Activated naive CD8-positive, alpha-beta T cell treated with anti-CD3 and anti-CD28 coated beads, Interleukin-2, amount 10 ng/mL, durations not matched to agents 7 days and 5 days (primary cell): ENCODE measurements at regions of chr17 and their contacts with region 1.

Region 1: GRCh38 chr17:75393523-75394331 is 11.8 kb downstream of the GRB2 start:
- DNase-seq: peak; percentile 82
- ATAC-seq: peak; percentile 91
- H3K4me3 Mint-ChIP-seq: peak overlapping the region; percentile 99
- H3K27ac Mint-ChIP-seq: peak overlapping the region; percentile 83
- H3K4me1 Mint-ChIP-seq: peaks cover 59% of the 10 kb centered on the region
- H3K27me3 Mint-ChIP-seq: no peaks in the 10 kb centered on the region

Region 2: DNA sequence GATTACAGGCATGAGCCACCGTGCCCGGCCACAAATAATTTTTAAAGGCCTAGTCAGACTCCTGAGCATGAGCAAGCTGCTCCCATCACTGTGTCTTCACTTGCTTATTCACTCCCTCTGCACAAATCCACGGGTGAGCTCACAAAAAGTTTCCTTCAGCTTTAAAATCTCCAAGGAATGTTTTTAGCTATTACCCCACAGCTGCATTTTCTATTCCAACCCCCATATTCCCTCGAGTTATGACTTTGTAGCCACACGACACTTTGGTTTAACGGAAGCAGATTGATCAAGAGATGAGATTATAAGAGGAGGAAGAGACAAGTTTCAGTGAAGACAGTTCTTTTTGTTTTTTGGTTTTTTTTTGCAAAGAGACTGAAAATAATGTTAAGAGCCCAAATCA is 55.4 kb before region 1 on chr17:
- POLR2A ChIA-PET with region 1: interaction called, 15 read pairs
- DNase-seq: no peak
- ATAC-seq: peak; percentile 33
- H3K4me3 Mint-ChIP-seq: peak overlapping the region; percentile 75
- H3K27ac Mint-ChIP-seq: peak overlapping the region; percentile 87
- H3K4me1 Mint-ChIP-seq: peaks cover 61% of the 10 kb centered on the region
- H3K27me3 Mint-ChIP-seq: no peaks in the 10 kb centered on the region